ENCODE measurements at regions of chr6 and their contacts with region 1.

Region 1: DNA sequence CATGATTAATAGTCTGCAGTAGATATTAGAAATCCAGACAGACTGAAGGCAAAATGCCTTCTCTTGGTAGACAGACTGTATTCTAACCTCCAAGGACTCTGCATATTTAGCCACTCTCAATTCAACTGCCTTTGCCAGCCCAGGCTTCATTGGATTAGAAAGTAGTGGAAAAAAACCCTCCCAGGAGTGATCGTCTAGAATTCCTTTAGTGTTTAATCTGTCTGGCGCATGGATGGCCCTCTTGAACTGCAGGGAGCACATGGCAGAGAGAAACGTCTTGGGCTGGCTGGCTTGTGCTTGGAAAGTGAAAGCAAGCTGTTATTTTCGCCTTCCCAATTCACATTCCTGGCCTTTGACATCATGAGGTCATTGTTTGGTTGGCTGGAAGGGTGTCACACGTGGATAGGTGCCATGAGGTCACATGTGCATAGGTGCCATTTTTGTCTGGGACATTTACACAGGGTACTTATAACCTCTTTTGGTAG is 30.9 kb upstream of the NEDD9 start:
- DNase-seq: no peak
- CTCF ChIP-seq: no peak

Region 2: DNA sequence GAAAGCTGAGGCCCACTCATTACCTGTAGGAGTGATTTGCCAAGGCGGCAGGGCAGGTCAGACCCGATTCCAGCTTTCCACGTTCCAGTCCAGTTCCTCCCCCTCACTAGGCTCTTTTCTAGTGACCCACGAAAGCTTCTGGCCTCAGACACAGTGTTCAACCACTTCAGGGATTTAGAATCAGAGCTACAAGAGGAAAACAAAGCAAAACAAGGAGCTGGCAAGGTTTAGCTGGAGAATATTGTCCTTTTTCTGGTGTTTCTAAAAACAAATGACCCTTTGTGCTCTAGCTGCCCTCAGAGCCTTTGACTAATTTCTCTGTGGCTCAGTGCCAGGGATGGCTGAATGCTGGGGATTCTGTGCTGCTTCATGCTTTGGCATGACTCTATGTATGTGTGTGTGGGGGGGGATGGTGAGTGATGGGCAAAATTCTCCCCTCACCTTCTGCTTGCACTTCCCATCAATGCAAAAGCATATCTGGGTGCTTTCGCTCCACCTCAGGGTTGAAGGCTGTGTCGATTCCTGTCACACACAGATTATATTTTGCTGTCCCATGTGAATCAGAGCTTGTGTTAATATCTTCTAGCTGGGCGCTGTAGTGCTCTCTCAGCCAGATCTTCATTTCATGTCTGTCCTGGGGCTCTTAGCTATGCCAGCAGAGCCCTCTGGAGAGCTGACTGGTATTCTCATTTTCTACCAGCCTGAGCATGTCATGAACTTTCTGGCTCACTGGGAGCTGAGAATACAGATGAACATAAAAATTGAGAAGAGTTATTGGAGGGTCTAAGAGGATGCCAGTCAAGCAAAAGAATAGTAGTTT is 11.6 kb before region 1 on chr6:
- CTCF ChIA-PET with region 1: interaction called, 12 read pairs
- POLR2A ChIA-PET with region 1: no interaction called
- DNase-seq: no peak
- CTCF ChIP-seq: no peak

Region 3: GRCh38 chr6:11277275-11278206 is 14.2 kb after region 1 on chr6:
- CTCF ChIA-PET with region 1: interaction called, 27 read pairs
- POLR2A ChIA-PET with region 1: no interaction called
- DNase-seq: peak; percentile 77
- CTCF ChIP-seq: no peak